ENCODE measurements at regions of chrX and their contacts with region 1.

Region 1: GRCh38 chrX:119817130-119817690 is 25.8 kb upstream of the RPL39 start:
- DNase-seq: no peak
- H3K4me3 ChIP-seq: no peak overlapping the region
- CTCF ChIP-seq: no peak

Region 2: DNA sequence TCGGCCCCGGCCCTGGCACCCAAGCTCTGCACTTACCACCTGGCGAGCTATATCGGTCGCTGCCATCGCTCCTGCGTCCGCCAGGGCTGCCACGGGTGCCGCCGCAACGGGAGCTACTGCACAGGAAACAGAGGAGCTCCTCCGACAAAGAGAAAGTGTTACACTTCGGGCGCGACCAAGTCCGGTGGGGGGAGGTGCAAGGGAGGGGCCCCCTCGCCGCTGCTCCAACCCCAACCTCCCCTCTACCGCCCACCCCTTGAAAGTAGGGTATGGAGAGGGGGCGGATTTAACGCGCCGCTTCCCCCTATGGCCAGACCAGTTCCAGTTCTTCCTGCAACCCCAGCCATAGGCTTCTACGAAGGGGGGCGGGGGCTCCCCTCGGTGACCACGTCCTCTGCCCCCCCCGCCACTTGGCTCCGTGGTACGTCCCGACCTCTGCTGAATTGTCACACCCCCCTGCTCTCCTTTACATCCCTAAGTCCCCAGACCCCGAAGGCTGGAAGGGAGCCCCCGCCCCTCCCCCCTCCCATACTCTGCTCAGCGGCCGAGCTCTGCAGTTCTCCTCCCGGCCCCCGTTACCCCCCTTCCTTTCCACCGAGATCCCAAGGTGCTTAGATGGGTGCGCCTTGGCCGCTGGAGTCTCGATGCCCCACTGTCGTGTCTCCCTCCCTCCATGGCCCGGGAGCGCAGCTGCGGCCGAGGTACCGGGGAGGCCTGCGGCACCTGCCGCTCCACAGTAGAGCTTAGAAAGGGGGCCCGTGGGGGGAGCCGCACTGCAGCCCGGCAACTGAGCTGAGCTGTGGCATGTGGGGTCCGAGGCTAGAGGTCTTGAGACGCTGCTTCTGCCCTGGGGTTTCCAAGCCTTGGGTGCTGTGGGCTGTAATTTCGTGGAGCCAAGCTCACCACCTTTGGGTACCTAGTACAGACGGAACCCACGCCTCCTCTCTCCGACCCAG is 123.9 kb before region 1 on chrX and contains the start of gene SEPTIN6:
- in situ Hi-C with region 1: no loop called
- DNase-seq: peak; percentile 20
- H3K4me3 ChIP-seq: peak within 1 kb of the TSS; percentile 55
- CTCF ChIP-seq: no peak

Region 3: GRCh38 chrX:119916310-119916709 is 99.1 kb after region 1 on chrX:
- in situ Hi-C with region 1: loop called (anchors 5 kb)
- DNase-seq: no peak
- H3K4me3 ChIP-seq: no peak overlapping the region
- CTCF ChIP-seq: no peak